ENCODE measurements at regions of chr3 and their contacts with region 1.

Region 1: GRCh38 chr3:15629860-15630597 is 28.5 kb downstream of the BTD start:
- DNase-seq: peak; percentile 70 to 78 (median 75)
- H3K4me3 ChIP-seq: no peak overlapping the region
- H3K4me3 Mint-ChIP-seq: peak overlapping the region; percentile 10 to 83 (median 73)
- H3K27ac ChIP-seq: no peak overlapping the region
- H3K27ac Mint-ChIP-seq: peak overlapping the region in 6 of 7 donors; percentile 14 to 79 (median 67)
- H3K4me1 ChIP-seq: peaks cover 30% of the 10 kb centered on the region
- H3K4me1 Mint-ChIP-seq: peaks cover 15 to 48% (median 31%) of the 10 kb centered on the region in 4 donors
- H3K27me3 ChIP-seq: no peaks in the 10 kb centered on the region
- H3K27me3 Mint-ChIP-seq: no peaks in the 10 kb centered on the region

Region 2: DNA sequence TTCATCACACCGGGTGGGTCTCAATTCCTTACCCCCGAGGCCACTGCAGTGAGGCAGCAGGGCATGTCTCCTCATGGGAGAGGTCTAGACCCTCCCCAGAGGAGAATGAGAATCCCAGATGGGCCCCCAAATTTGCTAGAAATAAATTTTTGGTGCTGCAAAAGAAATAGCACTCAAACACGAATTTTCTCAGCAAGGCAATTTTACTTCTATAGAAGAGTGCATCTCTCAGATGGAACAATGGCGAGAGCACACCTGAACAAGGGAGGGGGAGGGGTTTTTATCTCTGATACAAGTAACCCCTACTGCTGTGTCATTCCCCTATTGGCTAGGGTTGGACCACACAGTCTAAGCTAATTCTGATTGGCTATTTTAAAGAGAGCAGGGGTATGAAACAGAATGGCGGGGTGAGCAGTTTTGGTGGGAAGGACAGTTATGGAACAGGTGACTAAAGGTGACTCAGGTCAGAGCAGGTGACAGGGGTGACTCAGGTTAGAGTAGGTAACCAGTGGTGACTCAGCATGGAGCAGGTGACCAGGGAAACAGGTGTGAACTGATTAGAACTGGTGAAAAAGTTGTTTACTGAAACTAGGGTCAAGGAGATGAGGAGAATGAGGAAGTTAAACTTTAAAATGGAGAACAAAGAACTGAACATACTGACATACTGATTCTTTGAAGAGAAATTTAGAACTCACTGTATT is 1657.2 kb before region 1 on chr3:
- CTCF ChIA-PET with region 1: no interaction called
- POLR2A ChIA-PET with region 1: no interaction called
- intact Hi-C with region 1: no loop called
- DNase-seq: no peak
- H3K4me3 ChIP-seq: no peak overlapping the region
- H3K4me3 Mint-ChIP-seq: no peak overlapping the region
- H3K27ac ChIP-seq: no peak overlapping the region
- H3K27ac Mint-ChIP-seq: no peak overlapping the region
- H3K4me1 ChIP-seq: no peaks in the 10 kb centered on the region
- H3K4me1 Mint-ChIP-seq: no peaks in the 10 kb centered on the region
- H3K27me3 ChIP-seq: no peaks in the 10 kb centered on the region
- H3K27me3 Mint-ChIP-seq: peaks cover 0 to 1% of the 10 kb centered on the region in 2 donors

Region 3: GRCh38 chr3:15505479-15506165 is 124.4 kb before region 1 on chr3:
- CTCF ChIA-PET with region 1: no interaction called
- POLR2A ChIA-PET with region 1: no interaction called
- intact Hi-C with region 1: no loop called
- DNase-seq: no peak
- H3K4me3 ChIP-seq: no peak overlapping the region
- H3K4me3 Mint-ChIP-seq: no peak overlapping the region
- H3K27ac ChIP-seq: no peak overlapping the region
- H3K27ac Mint-ChIP-seq: no peak overlapping the region
- H3K4me1 ChIP-seq: peaks cover 3% of the 10 kb centered on the region
- H3K4me1 Mint-ChIP-seq: peaks cover 2 to 30% (median 8%) of the 10 kb centered on the region in 4 donors
- H3K27me3 ChIP-seq: no peaks in the 10 kb centered on the region
- H3K27me3 Mint-ChIP-seq: no peaks in the 10 kb centered on the region

Region 4: GRCh38 chr3:15667484-15667883 is 37.5 kb after region 1 on chr3:
- CTCF ChIA-PET with region 1: interaction called, 3 read pairs
- POLR2A ChIA-PET with region 1: no interaction called
- intact Hi-C with region 1: loop called (anchors 5 kb)
- DNase-seq: peak; percentile 58 to 78 (median 65)
- H3K4me3 ChIP-seq: no peak overlapping the region
- H3K4me3 Mint-ChIP-seq: peak overlapping the region in 7 of 8 donors; percentile 14 to 56 (median 49)
- H3K27ac ChIP-seq: no peak overlapping the region
- H3K27ac Mint-ChIP-seq: peak overlapping the region; percentile 4 to 64 (median 52)
- H3K4me1 ChIP-seq: peaks cover 17% of the 10 kb centered on the region
- H3K4me1 Mint-ChIP-seq: peaks cover 14 to 31% (median 22%) of the 10 kb centered on the region in 4 donors
- H3K27me3 ChIP-seq: no peaks in the 10 kb centered on the region
- H3K27me3 Mint-ChIP-seq: no peaks in the 10 kb centered on the region

Region 5: GRCh38 chr3:15797642-15798303 is 167.7 kb after region 1 on chr3 and contains the start of gene ANKRD28:
- CTCF ChIA-PET with region 1: interaction called, 14 read pairs
- POLR2A ChIA-PET with region 1: interaction called, 3 read pairs
- intact Hi-C with region 1: no loop called
- DNase-seq: peak in 4 of 5 donors; percentile 45 to 61 (median 52)
- H3K4me3 ChIP-seq: peak within 1 kb of the TSS; percentile 35 to 38
- H3K4me3 Mint-ChIP-seq: peak within 1 kb of the TSS; percentile 81 to 93 (median 91)
- H3K27ac ChIP-seq: peak within 1 kb of the TSS; percentile 72
- H3K27ac Mint-ChIP-seq: peak within 1 kb of the TSS; percentile 88 to 98 (median 95)
- H3K4me1 ChIP-seq: peaks cover 86% of the 10 kb centered on the region
- H3K4me1 Mint-ChIP-seq: peaks cover 49 to 92% (median 67%) of the 10 kb centered on the region in 4 donors
- H3K27me3 ChIP-seq: no peaks in the 10 kb centered on the region
- H3K27me3 Mint-ChIP-seq: no peaks in the 10 kb centered on the region
- total RNA-seq, gene ANKRD28: 35.9 to 42.0 TPM

Region 6: DNA sequence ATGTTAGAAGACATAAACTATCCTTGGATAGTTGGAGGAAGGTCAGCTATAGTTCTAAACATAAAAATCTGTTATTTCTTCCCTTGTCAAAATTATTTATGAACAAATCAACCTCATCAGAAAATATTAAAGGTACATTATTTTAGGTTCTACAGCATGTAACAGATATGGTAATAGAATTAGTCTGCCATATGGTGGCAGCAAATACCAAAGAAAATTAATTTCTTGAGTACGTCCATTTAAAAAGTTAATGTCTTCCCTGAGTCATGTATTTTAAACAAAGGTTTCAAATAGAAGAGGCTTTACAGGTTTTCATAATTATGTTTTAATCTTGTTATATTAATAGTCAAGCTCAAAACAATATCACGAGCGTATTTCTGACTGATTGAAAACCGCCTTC is 185.7 kb after region 1 on chr3:
- CTCF ChIA-PET with region 1: interaction called, 98 read pairs
- POLR2A ChIA-PET with region 1: interaction called, 7 read pairs
- intact Hi-C with region 1: loop called (anchors 1 kb)
- DNase-seq: peak in 3 of 5 donors; percentile 34 to 42 (median 36)
- H3K4me3 ChIP-seq: no peak overlapping the region
- H3K4me3 Mint-ChIP-seq: no peak overlapping the region
- H3K27ac ChIP-seq: no peak overlapping the region
- H3K27ac Mint-ChIP-seq: no peak overlapping the region
- H3K4me1 ChIP-seq: peaks cover 29% of the 10 kb centered on the region
- H3K4me1 Mint-ChIP-seq: peaks cover 22 to 55% (median 27%) of the 10 kb centered on the region in 4 donors
- H3K27me3 ChIP-seq: no peaks in the 10 kb centered on the region
- H3K27me3 Mint-ChIP-seq: no peaks in the 10 kb centered on the region

Region 7: GRCh38 chr3:15953841-15954240 is 323.8 kb after region 1 on chr3:
- CTCF ChIA-PET with region 1: no interaction called
- POLR2A ChIA-PET with region 1: no interaction called
- intact Hi-C with region 1: loop called (anchors 1 kb)
- DNase-seq: peak in 3 of 5 donors; percentile 1 to 7 (median 2)
- H3K4me3 ChIP-seq: no peak overlapping the region
- H3K4me3 Mint-ChIP-seq: no peak overlapping the region
- H3K27ac ChIP-seq: no peak overlapping the region
- H3K27ac Mint-ChIP-seq: no peak overlapping the region
- H3K4me1 ChIP-seq: no peaks in the 10 kb centered on the region
- H3K4me1 Mint-ChIP-seq: no peaks in the 10 kb centered on the region
- H3K27me3 ChIP-seq: peaks cover 4% of the 10 kb centered on the region
- H3K27me3 Mint-ChIP-seq: no peaks in the 10 kb centered on the region

Region 8: DNA sequence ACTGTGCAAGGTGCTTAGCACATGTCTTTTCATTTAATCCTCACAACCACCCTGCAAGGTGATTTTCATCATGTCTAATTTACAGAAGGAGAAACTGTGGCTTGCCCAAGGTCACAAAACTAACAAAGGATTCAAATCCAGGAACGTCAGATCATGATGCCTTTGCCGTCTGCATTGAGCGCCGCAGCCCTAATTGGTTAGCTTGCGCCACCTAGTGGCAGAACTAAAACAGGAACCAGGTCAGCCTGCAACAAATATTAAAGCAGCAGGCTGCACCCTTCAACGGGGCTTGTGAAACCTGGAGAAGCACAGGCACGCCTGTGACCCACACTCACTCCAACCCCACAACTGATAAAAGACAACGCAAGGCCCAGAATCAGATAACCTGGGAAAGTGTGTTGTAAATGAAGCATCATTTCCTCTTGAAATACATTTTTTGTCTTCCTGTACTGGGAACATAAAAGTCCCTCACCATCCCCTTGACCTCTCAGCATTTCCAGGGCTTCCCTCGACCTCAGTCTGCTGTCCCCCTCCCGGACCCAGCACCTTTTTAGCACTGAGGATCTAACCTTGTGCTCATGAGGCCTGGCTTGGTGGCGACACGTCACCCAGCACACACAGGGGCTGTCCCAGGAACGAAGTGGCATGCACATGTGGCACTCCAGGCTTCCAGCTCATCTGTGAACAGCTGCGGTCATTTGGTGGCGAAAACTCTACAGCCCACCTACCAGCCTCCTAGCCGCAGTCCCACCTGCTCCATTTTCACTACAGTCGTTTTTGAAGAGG is 617.4 kb after region 1 on chr3:
- CTCF ChIA-PET with region 1: interaction called, 3 read pairs
- POLR2A ChIA-PET with region 1: no interaction called
- intact Hi-C with region 1: loop called (anchors 1 kb)
- DNase-seq: peak; percentile 73 to 78 (median 75)
- H3K4me3 ChIP-seq: no peak overlapping the region
- H3K4me3 Mint-ChIP-seq: peak overlapping the region in 5 of 8 donors; percentile 10 to 57 (median 38)
- H3K27ac ChIP-seq: no peak overlapping the region
- H3K27ac Mint-ChIP-seq: peak overlapping the region in 1 of 7 donors; percentile 32
- H3K4me1 ChIP-seq: peaks cover 3% of the 10 kb centered on the region
- H3K4me1 Mint-ChIP-seq: peaks cover 6 to 17% (median 9%) of the 10 kb centered on the region in 4 donors
- H3K27me3 ChIP-seq: no peaks in the 10 kb centered on the region
- H3K27me3 Mint-ChIP-seq: no peaks in the 10 kb centered on the region

Measured in CD4-positive, alpha-beta memory T cell (primary cell).